ENCODE measurements at regions of chr15 and their contacts with region 1.

Region 1: GRCh38 chr15:50107591-50108408 is 11.2 kb downstream of the ATP8B4 start:
- DNase-seq: peak; percentile 90 to 95 (median 94)
- H3K4me3 ChIP-seq: peak overlapping the region; percentile 14 to 76 (median 40)
- H3K4me3 Mint-ChIP-seq: peak overlapping the region; percentile 45 to 93
- H3K27ac ChIP-seq: peak overlapping the region; percentile 93 to 95
- H3K27ac Mint-ChIP-seq: peak overlapping the region; percentile 95 to 98 (median 96)
- H3K4me1 ChIP-seq: peaks cover 68 to 82% of the 10 kb centered on the region in 2 donors
- H3K4me1 Mint-ChIP-seq: peaks cover 85% of the 10 kb centered on the region
- H3K27me3 ChIP-seq: no peaks in the 10 kb centered on the region
- H3K27me3 Mint-ChIP-seq: peaks cover 0 to 1% (median 0%) of the 10 kb centered on the region in 3 donors
- CTCF ChIP-seq: no peak

Region 2: GRCh38 chr15:50051803-50052419 is 55.9 kb before region 1 on chr15:
- intact Hi-C with region 1: loop called (anchors 2 to 10 kb)
- DNase-seq: peak; percentile 79 to 86 (median 80)
- H3K4me3 ChIP-seq: peak overlapping the region in 1 of 3 experiments; percentile 11
- H3K4me3 Mint-ChIP-seq: no peak overlapping the region
- H3K27ac ChIP-seq: peak overlapping the region in 1 of 2 donors; percentile 87
- H3K27ac Mint-ChIP-seq: peak overlapping the region; percentile 87 to 98 (median 91)
- H3K4me1 ChIP-seq: peaks cover 53 to 55% of the 10 kb centered on the region in 2 donors
- H3K4me1 Mint-ChIP-seq: peaks cover 52% of the 10 kb centered on the region
- H3K27me3 ChIP-seq: no peaks in the 10 kb centered on the region
- H3K27me3 Mint-ChIP-seq: no peaks in the 10 kb centered on the region
- CTCF ChIP-seq: peak; percentile 75

Region 3: DNA sequence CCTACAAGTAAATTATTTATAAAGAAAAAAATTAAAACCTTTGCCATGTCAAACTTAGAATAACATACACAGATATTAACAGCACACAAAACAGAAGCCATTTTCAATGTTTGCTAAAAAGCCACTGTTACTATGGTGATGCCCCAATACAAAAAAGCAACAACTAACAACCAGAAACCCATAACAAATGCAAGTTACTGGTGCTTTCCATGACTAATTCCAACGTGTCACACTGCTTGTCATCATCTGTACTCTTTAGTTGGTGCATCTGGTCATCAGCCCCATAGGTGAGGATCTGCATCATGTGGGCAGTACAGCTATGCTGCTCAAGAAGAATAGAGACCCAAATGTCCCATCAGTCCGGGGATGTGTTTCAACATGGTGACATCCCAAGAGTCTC is 41.6 kb before region 1 on chr15:
- intact Hi-C with region 1: loop called in 1 of 2 experiments (anchors 2 kb)
- DNase-seq: peak; percentile 91 to 97 (median 97)
- H3K4me3 ChIP-seq: no peak overlapping the region
- H3K4me3 Mint-ChIP-seq: no peak overlapping the region
- H3K27ac ChIP-seq: peak overlapping the region in 1 of 2 donors; percentile 91
- H3K27ac Mint-ChIP-seq: peak overlapping the region; percentile 95 to 99 (median 96)
- H3K4me1 ChIP-seq: peaks cover 29 to 49% of the 10 kb centered on the region in 2 donors
- H3K4me1 Mint-ChIP-seq: peaks cover 46% of the 10 kb centered on the region
- H3K27me3 ChIP-seq: no peaks in the 10 kb centered on the region
- H3K27me3 Mint-ChIP-seq: no peaks in the 10 kb centered on the region
- CTCF ChIP-seq: no peak

Region 4: GRCh38 chr15:50365971-50366370 is 258.2 kb after region 1 on chr15:
- intact Hi-C with region 1: no loop called
- DNase-seq: no peak
- H3K4me3 ChIP-seq: no peak overlapping the region
- H3K4me3 Mint-ChIP-seq: no peak overlapping the region
- H3K27ac ChIP-seq: no peak overlapping the region
- H3K27ac Mint-ChIP-seq: peak overlapping the region in 1 of 7 donors; percentile 21
- H3K4me1 ChIP-seq: no peaks in the 10 kb centered on the region
- H3K4me1 Mint-ChIP-seq: peaks cover 10% of the 10 kb centered on the region
- H3K27me3 ChIP-seq: no peaks in the 10 kb centered on the region
- H3K27me3 Mint-ChIP-seq: peaks cover 0 to 1% (median 0%) of the 10 kb centered on the region in 3 donors
- CTCF ChIP-seq: no peak

Measured in CD14-positive monocyte (primary cell).